ENCODE measurements at regions of chr6 and their contacts with region 1.

Region 1: GRCh38 chr6:53725791-53726431 is 60.4 kb upstream of the KLHL31 start:
- DNase-seq: peak; percentile 65 to 93 (median 86)

Region 2: DNA sequence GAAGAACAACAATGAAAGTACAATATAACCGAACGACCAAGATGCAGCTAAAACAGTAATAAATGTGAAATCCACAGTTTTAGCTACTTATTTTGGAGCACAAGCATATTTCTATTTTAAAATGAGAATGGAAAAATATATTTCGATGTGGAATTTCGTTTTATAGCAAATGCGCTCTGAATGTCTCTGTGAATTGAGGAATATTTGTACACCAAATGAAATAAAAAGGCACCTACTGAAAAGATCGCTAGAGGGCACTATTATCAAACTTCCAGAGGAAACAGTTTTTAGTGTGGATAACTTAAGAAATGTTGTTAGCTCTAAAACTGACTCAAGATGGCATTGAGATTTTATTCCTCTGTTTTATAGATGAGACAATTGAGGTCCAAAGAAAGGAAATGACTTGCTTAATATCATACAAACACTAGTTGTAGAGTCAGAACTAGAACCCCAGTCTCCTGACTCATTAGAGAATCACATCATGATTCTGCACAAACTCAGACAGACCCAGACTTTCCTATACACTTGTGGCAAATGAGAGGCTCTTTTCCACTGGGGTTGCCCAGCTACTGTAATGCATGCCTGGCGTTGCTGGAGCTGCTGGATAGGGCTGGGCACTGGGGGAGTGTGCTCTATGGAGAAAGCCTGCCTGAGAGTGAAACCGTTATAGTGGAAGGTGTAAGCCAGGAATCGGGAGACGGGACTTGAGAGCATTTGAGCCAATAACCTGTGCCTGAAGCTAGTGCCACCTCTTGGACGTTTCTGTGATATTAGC is 232.9 kb before region 1 on chr6:
- intact Hi-C with region 1: loop called (anchors 2 kb)
- DNase-seq: peak in 5 of 42 donors; percentile 14 to 67 (median 41)